ENCODE measurements at regions of chr6 and their contacts with region 1.

Region 1: DNA sequence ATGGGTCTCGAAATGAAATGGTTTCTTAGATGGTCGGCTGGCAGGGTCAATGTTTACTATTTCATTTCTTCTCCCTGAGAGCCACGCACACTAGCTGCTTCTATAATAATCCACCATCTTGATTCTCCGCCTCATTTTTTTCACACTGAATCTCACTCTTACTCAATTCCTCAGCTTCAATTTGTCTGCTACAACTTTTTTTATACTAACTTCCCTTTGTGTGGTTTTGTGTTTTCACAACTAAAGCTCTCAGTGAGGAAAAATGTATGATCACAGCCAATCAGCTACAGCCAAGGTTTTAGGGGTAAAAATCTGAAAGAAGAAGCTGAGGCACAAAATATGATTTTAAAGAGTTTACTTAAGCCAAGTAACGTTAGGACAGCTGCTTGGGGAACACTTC is 1309.4 kb downstream of the EPHA7 start:
- DNase-seq: no peak
- H3K4me3 ChIP-seq: no peak overlapping the region
- H3K27ac ChIP-seq: no peak overlapping the region
- H3K4me1 ChIP-seq: no peaks in the 10 kb centered on the region
- H3K27me3 ChIP-seq: no peaks in the 10 kb centered on the region
- CTCF ChIP-seq: no peak
- EP300 ChIP-seq: no peak
- POLR2A ChIP-seq: no peak

Region 2: DNA sequence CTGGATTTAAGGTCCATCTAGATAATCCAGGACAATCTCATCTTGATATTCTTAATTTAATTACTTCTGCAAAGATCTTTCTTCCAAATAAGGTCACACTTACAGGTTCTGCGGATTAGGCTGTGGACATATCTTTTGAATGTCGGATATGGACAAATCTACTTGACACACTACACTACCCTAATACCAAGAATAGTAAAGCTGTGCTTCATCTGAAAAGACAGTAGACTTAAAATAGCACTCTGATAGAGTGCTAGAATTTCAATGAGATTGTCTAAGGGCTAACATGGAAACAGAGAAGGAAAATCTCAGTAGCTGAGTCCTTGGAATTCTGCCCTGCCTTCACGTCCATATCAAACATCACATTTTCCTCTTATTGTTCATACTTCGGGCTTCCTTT is 71.4 kb after region 1 on chr6:
- in situ Hi-C with region 1: no loop called
- intact Hi-C with region 1: no loop called
- DNase-seq: no peak
- H3K4me3 ChIP-seq: no peak overlapping the region
- H3K27ac ChIP-seq: no peak overlapping the region
- H3K4me1 ChIP-seq: no peaks in the 10 kb centered on the region
- H3K27me3 ChIP-seq: no peaks in the 10 kb centered on the region
- CTCF ChIP-seq: no peak
- EP300 ChIP-seq: no peak
- POLR2A ChIP-seq: no peak

Region 3: GRCh38 chr6:92376691-92377090 is 266.7 kb after region 1 on chr6:
- in situ Hi-C with region 1: no loop called
- intact Hi-C with region 1: no loop called
- DNase-seq: no peak
- H3K4me3 ChIP-seq: no peak overlapping the region
- H3K27ac ChIP-seq: no peak overlapping the region
- H3K4me1 ChIP-seq: no peaks in the 10 kb centered on the region
- H3K27me3 ChIP-seq: no peaks in the 10 kb centered on the region
- CTCF ChIP-seq: no peak
- EP300 ChIP-seq: no peak
- POLR2A ChIP-seq: no peak

Region 4: DNA sequence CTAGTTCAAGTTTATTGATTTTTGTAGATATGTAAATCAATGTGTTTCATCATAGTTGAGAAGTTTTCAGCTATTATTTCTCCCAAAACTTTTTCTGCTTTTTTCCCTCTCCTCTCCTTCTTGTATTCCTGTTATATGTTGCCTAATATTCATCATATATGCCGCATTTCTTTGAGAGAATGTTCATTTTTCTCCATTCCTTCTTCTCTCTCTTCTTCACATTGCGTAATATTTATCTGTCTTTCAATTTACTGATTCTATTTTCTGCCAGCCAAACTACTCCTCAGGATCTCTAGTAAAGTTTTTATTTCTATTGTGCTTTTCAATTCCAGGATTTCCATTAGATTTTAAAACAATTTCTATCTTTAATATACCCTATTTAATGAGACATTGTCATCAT is 412.6 kb after region 1 on chr6:
- in situ Hi-C with region 1: no loop called
- intact Hi-C with region 1: no loop called
- DNase-seq: no peak
- H3K4me3 ChIP-seq: no peak overlapping the region
- H3K27ac ChIP-seq: no peak overlapping the region
- H3K4me1 ChIP-seq: no peaks in the 10 kb centered on the region
- H3K27me3 ChIP-seq: no peaks in the 10 kb centered on the region
- CTCF ChIP-seq: no peak
- EP300 ChIP-seq: no peak
- POLR2A ChIP-seq: no peak

Region 5: DNA sequence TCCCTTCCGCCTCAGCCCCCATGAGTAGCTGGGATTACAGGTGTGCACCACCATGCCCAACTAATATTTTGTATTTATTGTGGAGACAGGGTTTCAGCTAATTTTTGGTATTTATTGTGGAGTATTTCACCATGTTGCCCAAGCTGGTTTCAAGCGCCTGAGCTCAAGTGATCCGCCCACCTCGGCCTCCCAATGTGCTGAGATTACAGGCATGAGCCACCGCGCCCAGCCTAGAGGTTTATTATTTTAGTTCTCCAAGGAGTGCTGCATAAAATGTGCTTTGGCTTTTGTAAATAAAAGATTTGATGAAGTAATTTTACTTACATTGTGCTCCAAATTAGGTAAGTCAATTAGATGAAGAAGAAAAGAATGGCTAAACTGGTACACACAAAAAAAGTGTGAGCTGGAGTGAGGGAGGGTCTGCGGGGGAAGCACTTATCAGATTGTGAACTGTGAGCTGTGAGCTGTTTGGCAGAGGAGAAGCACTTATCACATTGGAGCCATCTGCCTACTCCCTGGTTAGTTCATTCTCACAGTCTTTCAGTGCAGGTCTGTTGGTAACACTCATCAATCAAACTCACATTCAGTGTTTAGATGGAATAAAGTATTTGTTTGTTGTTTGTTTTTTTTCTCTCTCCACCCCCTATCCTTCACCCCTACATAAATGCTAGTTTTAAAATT is 911.4 kb after region 1 on chr6:
- in situ Hi-C with region 1: no loop called
- intact Hi-C with region 1: loop called (anchors 5 kb)
- DNase-seq: no peak
- H3K4me3 ChIP-seq: no peak overlapping the region
- H3K27ac ChIP-seq: no peak overlapping the region
- H3K4me1 ChIP-seq: no peaks in the 10 kb centered on the region
- H3K27me3 ChIP-seq: no peaks in the 10 kb centered on the region
- CTCF ChIP-seq: no peak
- EP300 ChIP-seq: no peak
- POLR2A ChIP-seq: no peak